ENCODE measurements at regions of chr12 and their contacts with region 1.

Region 1: GRCh38 chr12:3135522-3136461 is 58.6 kb downstream of the TSPAN9 start:
- DNase-seq: peak; percentile 48
- H3K4me3 Mint-ChIP-seq: no peak overlapping the region
- H3K27ac Mint-ChIP-seq: no peak overlapping the region
- H3K4me1 Mint-ChIP-seq: peaks cover 2% of the 10 kb centered on the region
- H3K27me3 Mint-ChIP-seq: peaks cover 43% of the 10 kb centered on the region

Region 2: GRCh38 chr12:2756756-2757155 is 379.0 kb before region 1 on chr12:
- CTCF ChIA-PET with region 1: no interaction called
- intact Hi-C with region 1: no loop called
- DNase-seq: no peak
- H3K4me3 Mint-ChIP-seq: no peak overlapping the region
- H3K27ac Mint-ChIP-seq: no peak overlapping the region
- H3K4me1 Mint-ChIP-seq: no peaks in the 10 kb centered on the region
- H3K27me3 Mint-ChIP-seq: peaks cover 24% of the 10 kb centered on the region

Region 3: GRCh38 chr12:3073438-3074250 is 62.1 kb before region 1 on chr12:
- CTCF ChIA-PET with region 1: no interaction called
- intact Hi-C with region 1: loop called (anchors 5 kb)
- DNase-seq: peak; percentile 91
- H3K4me3 Mint-ChIP-seq: no peak overlapping the region
- H3K27ac Mint-ChIP-seq: no peak overlapping the region
- H3K4me1 Mint-ChIP-seq: peaks cover 5% of the 10 kb centered on the region
- H3K27me3 Mint-ChIP-seq: peaks cover 11% of the 10 kb centered on the region

Region 4: GRCh38 chr12:3119748-3120601 is 15.8 kb before region 1 on chr12:
- CTCF ChIA-PET with region 1: interaction called, 13 read pairs
- intact Hi-C with region 1: no loop called
- DNase-seq: no peak
- H3K4me3 Mint-ChIP-seq: no peak overlapping the region
- H3K27ac Mint-ChIP-seq: no peak overlapping the region
- H3K4me1 Mint-ChIP-seq: peaks cover 12% of the 10 kb centered on the region
- H3K27me3 Mint-ChIP-seq: peaks cover 7% of the 10 kb centered on the region

Region 5: GRCh38 chr12:3202734-3203446 is 67.1 kb after region 1 on chr12:
- CTCF ChIA-PET with region 1: interaction called, 27 read pairs
- intact Hi-C with region 1: loop called (anchors 1 kb)
- DNase-seq: peak; percentile 79
- H3K4me3 Mint-ChIP-seq: no peak overlapping the region
- H3K27ac Mint-ChIP-seq: no peak overlapping the region
- H3K4me1 Mint-ChIP-seq: peaks cover 9% of the 10 kb centered on the region
- H3K27me3 Mint-ChIP-seq: peaks cover 37% of the 10 kb centered on the region

Region 6: GRCh38 chr12:3275171-3276041 is 139.6 kb after region 1 on chr12:
- CTCF ChIA-PET with region 1: interaction called, 84 read pairs
- intact Hi-C with region 1: loop called (anchors 1 kb)
- DNase-seq: peak; percentile 82
- H3K4me3 Mint-ChIP-seq: no peak overlapping the region
- H3K27ac Mint-ChIP-seq: no peak overlapping the region
- H3K4me1 Mint-ChIP-seq: no peaks in the 10 kb centered on the region
- H3K27me3 Mint-ChIP-seq: no peaks in the 10 kb centered on the region

Measured in activated naive CD4-positive, alpha-beta T cell treated with anti-CD3 and anti-CD28 coated beads for 36 hours (primary cell).